ENCODE measurements at regions of chr7 and their contacts with region 1.

Region 1: GRCh38 chr7:148813890-148814289 is 70.2 kb downstream of the EZH2 start:
- DNase-seq: no peak
- H3K4me3 Mint-ChIP-seq: no peak overlapping the region
- H3K27ac Mint-ChIP-seq: no peak overlapping the region
- H3K4me1 Mint-ChIP-seq: no peaks in the 10 kb centered on the region
- H3K27me3 Mint-ChIP-seq: no peaks in the 10 kb centered on the region

Region 2: DNA sequence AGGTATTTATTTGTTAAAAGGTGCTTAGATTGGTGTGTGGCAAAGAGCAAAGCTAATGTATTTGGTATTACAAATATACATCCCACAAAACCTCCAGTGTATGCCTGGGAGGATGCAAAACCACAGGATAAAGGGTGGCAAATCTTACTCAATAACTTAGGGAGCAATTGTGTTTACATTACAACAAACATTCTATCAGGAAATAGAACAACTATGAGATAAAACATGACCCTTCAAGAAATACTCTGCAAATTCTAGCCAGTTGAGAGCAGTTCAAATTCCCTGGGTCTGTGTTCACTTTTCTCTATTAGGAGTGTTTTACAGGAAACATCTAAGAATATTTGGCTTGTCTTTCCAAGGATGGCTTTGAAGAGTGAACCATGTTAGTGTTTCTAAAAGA is 50.3 kb before region 1 on chr7:
- intact Hi-C with region 1: no loop called
- DNase-seq: no peak
- H3K4me3 Mint-ChIP-seq: no peak overlapping the region
- H3K27ac Mint-ChIP-seq: no peak overlapping the region
- H3K4me1 Mint-ChIP-seq: no peaks in the 10 kb centered on the region
- H3K27me3 Mint-ChIP-seq: no peaks in the 10 kb centered on the region

Region 3: GRCh38 chr7:148828965-148829364 is 15.1 kb after region 1 on chr7:
- intact Hi-C with region 1: loop called (anchors 2 kb)
- DNase-seq: no peak
- H3K4me3 Mint-ChIP-seq: no peak overlapping the region
- H3K27ac Mint-ChIP-seq: no peak overlapping the region
- H3K4me1 Mint-ChIP-seq: peaks cover 32% of the 10 kb centered on the region
- H3K27me3 Mint-ChIP-seq: no peaks in the 10 kb centered on the region

Measured in activated T-helper 1 cell treated with anti-CD3 and anti-CD28 coated beads, Interleukin-12 subunit alpha, Interleukin-12 subunit beta, Interleukin-2, Interleukin-4 antibody, amounts not matched to agents 30 ng/mL and 10 ng/mL and 1 ng/mL, durations not matched to agents 14 hours and 24 hours and 36 hours (primary cell).